ENCODE measurements at regions of chr11 and their contacts with region 1.

Region 1: GRCh38 chr11:13343931-13344717 is 66.5 kb downstream of the BMAL1 start:
- DNase-seq: peak; percentile 75 to 80 (median 78)
- ATAC-seq: peak; percentile 61
- H3K4me3 ChIP-seq: no peak overlapping the region
- H3K27ac ChIP-seq: no peak overlapping the region
- H3K4me1 ChIP-seq: peaks cover 18% of the 10 kb centered on the region
- H3K27me3 ChIP-seq: no peaks in the 10 kb centered on the region
- CTCF ChIP-seq: peak; percentile 79 to 87 (median 82)
- POLR2A ChIP-seq: no peak

Region 2: GRCh38 chr11:12963792-12964536 is 380.2 kb before region 1 on chr11:
- intact Hi-C with region 1: loop called (anchors 10 kb)
- DNase-seq: peak; percentile 68 to 82 (median 76)
- ATAC-seq: peak; percentile 79
- H3K4me3 ChIP-seq: no peak overlapping the region
- H3K27ac ChIP-seq: no peak overlapping the region
- H3K4me1 ChIP-seq: peaks cover 8% of the 10 kb centered on the region
- H3K27me3 ChIP-seq: no peaks in the 10 kb centered on the region
- CTCF ChIP-seq: peak; percentile 65 to 91 (median 89)
- POLR2A ChIP-seq: no peak

Region 3: DNA sequence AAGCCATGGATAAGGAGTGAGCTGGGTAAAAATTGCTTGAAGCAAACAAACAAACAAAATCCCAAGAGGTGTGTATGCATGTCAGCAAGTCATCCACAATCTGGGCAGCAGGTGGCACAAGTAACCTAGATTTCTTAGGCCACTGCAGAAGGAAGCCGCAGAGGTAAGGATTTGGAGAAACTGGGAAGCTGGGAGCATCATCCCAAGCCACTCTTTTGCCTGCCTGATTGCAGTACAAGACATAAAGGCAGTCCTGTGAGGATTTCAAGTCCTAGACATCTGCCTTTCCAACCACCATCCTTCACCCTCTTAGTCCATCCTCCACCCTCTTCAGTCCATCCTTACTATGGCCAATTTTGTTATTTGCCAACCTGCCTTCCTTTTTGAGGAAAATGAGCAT is 133.7 kb before region 1 on chr11:
- intact Hi-C with region 1: loop called (anchors 5 kb)
- DNase-seq: peak; percentile 69 to 80 (median 74)
- ATAC-seq: peak; percentile 77
- H3K4me3 ChIP-seq: no peak overlapping the region
- H3K27ac ChIP-seq: no peak overlapping the region
- H3K4me1 ChIP-seq: no peaks in the 10 kb centered on the region
- H3K27me3 ChIP-seq: no peaks in the 10 kb centered on the region
- CTCF ChIP-seq: peak in 6 of 7 experiments; percentile 47 to 81 (median 78)
- POLR2A ChIP-seq: no peak

Region 4: GRCh38 chr11:13249996-13250395 is 94.1 kb before region 1 on chr11:
- intact Hi-C with region 1: no loop called
- DNase-seq: no peak
- ATAC-seq: no peak
- H3K4me3 ChIP-seq: no peak overlapping the region
- H3K27ac ChIP-seq: no peak overlapping the region
- H3K4me1 ChIP-seq: no peaks in the 10 kb centered on the region
- H3K27me3 ChIP-seq: no peaks in the 10 kb centered on the region
- CTCF ChIP-seq: no peak
- POLR2A ChIP-seq: no peak

Region 5: GRCh38 chr11:13638422-13638821 is 294.3 kb after region 1 on chr11:
- intact Hi-C with region 1: no loop called
- DNase-seq: no peak
- ATAC-seq: no peak
- H3K4me3 ChIP-seq: no peak overlapping the region
- H3K27ac ChIP-seq: no peak overlapping the region
- H3K4me1 ChIP-seq: peaks cover 28% of the 10 kb centered on the region
- H3K27me3 ChIP-seq: no peaks in the 10 kb centered on the region
- CTCF ChIP-seq: no peak
- POLR2A ChIP-seq: no peak

Measured in body of pancreas (tissue), 4 donors.